Activated CD8-positive, alpha-beta T cell treated with anti-CD3 and anti-CD28 coated beads for 36 hours (primary cell): ENCODE measurements at regions of chr10 and their contacts with region 1.

Region 1: DNA sequence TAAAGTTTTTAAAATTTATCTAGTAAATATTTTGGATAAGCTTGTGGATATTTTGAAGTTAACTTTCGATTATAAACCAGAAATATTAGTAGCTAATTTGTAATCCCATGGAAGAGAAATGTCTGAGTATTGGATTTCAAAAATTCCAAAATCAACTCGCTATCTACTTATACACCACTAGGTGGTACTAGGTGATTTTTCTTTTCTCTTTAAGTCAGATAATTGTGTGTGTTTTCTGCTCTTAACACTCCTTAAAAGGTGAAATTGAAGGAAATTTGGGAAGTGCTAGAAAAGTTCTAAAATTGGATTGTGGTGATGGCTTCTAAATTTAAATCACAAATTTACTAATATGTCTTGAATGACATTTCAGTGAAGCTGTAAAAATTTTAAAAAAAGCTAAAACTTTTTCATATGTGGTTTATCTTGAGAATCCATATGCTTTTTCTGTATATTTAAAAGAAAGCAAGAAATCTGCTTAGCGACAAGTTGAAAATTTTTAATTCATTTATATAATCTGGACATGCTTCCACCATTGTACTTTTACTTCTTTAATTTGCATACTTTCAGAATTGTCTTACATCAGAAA is 90.2 kb downstream of the IPMK start:
- DNase-seq: no peak
- ATAC-seq: no peak
- H3K4me3 Mint-ChIP-seq: no peak overlapping the region
- H3K27ac Mint-ChIP-seq: no peak overlapping the region
- H3K4me1 Mint-ChIP-seq: no peaks in the 10 kb centered on the region
- H3K27me3 Mint-ChIP-seq: peaks cover 4% of the 10 kb centered on the region
- CTCF ChIP-seq: peak; percentile 81

Region 2: GRCh38 chr10:58189269-58189668 is 11.8 kb after region 1 on chr10:
- CTCF ChIA-PET with region 1: interaction called, 14 read pairs
- POLR2A ChIA-PET with region 1: no interaction called
- intact Hi-C with region 1: no loop called
- DNase-seq: no peak
- ATAC-seq: no peak
- H3K4me3 Mint-ChIP-seq: no peak overlapping the region
- H3K27ac Mint-ChIP-seq: no peak overlapping the region
- H3K4me1 Mint-ChIP-seq: no peaks in the 10 kb centered on the region
- H3K27me3 Mint-ChIP-seq: peaks cover 15% of the 10 kb centered on the region
- CTCF ChIP-seq: no peak

Region 3: DNA sequence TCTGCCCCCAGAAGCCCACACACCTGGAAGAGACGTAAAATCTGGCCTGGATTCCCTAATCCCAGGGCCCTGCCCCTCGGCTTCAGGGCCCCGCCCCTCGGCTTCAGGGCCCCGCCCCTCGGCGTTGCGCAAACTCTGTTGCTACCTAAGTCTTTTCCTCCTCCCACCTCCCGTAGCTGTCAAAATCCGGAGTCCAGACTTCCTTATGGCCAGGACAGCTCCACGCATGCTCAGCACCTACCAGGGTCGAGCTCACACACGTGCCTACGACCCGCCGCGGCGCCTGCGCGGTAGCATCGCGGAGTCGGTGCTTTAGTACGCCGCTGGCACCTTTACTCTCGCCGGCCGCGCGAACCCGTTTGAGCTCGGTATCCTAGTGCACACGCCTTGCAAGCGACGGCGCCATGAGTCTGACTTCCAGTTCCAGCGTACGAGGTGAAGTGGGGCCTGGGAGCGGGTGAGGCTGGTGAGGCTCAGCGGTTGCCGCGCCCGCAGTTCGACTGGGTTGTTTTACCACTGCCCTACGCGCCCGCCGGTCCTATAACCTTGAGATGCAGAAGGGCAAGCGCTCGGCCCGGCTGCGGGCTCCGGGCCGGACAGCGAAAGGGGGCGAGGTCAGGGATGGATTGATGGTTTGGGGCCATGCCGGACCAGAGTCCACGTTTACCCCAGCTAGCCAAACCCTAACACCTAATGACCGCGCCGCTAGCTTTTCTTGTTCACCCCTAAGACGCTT is 91.6 kb after region 1 on chr10 and contains the start of gene CISD1:
- CTCF ChIA-PET with region 1: interaction called, 12 read pairs
- POLR2A ChIA-PET with region 1: no interaction called
- intact Hi-C with region 1: no loop called
- DNase-seq: peak; percentile 96
- ATAC-seq: peak; percentile 78
- H3K4me3 Mint-ChIP-seq: peak within 1 kb of the TSS; percentile 99
- H3K27ac Mint-ChIP-seq: peak within 1 kb of the TSS; percentile 91
- H3K4me1 Mint-ChIP-seq: peaks cover 24% of the 10 kb centered on the region
- H3K27me3 Mint-ChIP-seq: no peaks in the 10 kb centered on the region
- CTCF ChIP-seq: no peak
- total RNA-seq, gene CISD1: 49.7 to 58.2 TPM

Region 4: GRCh38 chr10:58291538-58292174 is 114.2 kb after region 1 on chr10:
- CTCF ChIA-PET with region 1: interaction called, 151 read pairs
- POLR2A ChIA-PET with region 1: no interaction called
- intact Hi-C with region 1: loop called (anchors 2 kb)
- DNase-seq: peak; percentile 41
- ATAC-seq: peak; percentile 65
- H3K4me3 Mint-ChIP-seq: no peak overlapping the region
- H3K27ac Mint-ChIP-seq: no peak overlapping the region
- H3K4me1 Mint-ChIP-seq: no peaks in the 10 kb centered on the region
- H3K27me3 Mint-ChIP-seq: no peaks in the 10 kb centered on the region
- CTCF ChIP-seq: peak; percentile 79

Region 5: DNA sequence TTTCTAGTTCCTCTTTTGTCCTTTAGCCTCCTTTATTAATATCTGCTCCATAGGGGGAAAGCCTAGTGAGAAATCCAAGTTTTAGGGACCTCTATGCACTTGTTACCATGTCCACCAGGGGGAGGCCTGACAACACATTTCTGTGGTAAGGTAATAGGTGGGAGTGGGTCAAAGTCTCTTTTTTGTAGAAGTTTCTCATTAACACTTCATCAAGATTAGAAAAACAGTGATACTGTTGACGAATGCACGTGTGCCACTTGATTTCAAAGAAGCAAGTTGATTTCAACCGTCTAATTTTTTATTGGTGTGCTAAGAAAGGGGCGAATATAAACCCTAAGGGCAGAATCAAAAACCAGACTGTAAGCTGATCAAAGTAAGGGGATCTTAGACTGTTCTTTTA is 122.1 kb after region 1 on chr10:
- CTCF ChIA-PET with region 1: interaction called, 151 read pairs
- POLR2A ChIA-PET with region 1: no interaction called
- intact Hi-C with region 1: no loop called
- DNase-seq: peak; percentile 74
- ATAC-seq: peak; percentile 83
- H3K4me3 Mint-ChIP-seq: no peak overlapping the region
- H3K27ac Mint-ChIP-seq: no peak overlapping the region
- H3K4me1 Mint-ChIP-seq: peaks cover 2% of the 10 kb centered on the region
- H3K27me3 Mint-ChIP-seq: peaks cover 10% of the 10 kb centered on the region
- CTCF ChIP-seq: peak; percentile 85

Region 6: DNA sequence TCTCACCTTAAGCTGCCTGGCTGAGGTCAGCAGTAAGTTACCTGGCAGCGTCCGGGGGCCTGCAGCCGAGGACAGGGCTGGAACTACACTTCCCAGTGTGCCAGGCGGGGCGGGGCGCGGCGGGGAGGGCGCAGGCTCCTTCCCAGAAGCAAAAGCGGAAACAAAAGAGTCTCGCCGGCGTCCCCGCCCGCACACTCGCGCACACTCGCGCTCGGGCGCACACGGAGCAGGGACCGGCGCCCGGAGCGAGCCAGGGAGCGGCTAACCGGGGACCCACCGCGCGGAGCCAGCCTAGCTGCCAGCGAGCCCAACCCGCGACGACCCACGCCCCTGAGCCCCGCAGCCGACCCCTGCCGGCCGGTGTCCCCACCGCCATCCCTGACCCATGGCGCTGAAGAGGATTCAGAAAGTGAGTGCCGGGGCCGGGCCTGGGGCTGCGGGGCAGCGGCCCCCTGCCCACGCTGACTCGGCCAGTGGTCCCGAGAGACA is 157.4 kb after region 1 on chr10 and contains the start of gene UBE2D1:
- CTCF ChIA-PET with region 1: no interaction called
- POLR2A ChIA-PET with region 1: no interaction called
- intact Hi-C with region 1: no loop called
- DNase-seq: peak; percentile 90
- ATAC-seq: peak; percentile 98
- H3K4me3 Mint-ChIP-seq: peak within 1 kb of the TSS; percentile 91
- H3K27ac Mint-ChIP-seq: peak within 1 kb of the TSS; percentile 69
- H3K4me1 Mint-ChIP-seq: peaks cover 30% of the 10 kb centered on the region
- H3K27me3 Mint-ChIP-seq: no peaks in the 10 kb centered on the region
- CTCF ChIP-seq: no peak
- total RNA-seq, gene UBE2D1: 12.1 to 12.8 TPM